Spleen (tissue), 13 donors: ENCODE measurements at regions of chr11 and their contacts with region 1.

Region 1: DNA sequence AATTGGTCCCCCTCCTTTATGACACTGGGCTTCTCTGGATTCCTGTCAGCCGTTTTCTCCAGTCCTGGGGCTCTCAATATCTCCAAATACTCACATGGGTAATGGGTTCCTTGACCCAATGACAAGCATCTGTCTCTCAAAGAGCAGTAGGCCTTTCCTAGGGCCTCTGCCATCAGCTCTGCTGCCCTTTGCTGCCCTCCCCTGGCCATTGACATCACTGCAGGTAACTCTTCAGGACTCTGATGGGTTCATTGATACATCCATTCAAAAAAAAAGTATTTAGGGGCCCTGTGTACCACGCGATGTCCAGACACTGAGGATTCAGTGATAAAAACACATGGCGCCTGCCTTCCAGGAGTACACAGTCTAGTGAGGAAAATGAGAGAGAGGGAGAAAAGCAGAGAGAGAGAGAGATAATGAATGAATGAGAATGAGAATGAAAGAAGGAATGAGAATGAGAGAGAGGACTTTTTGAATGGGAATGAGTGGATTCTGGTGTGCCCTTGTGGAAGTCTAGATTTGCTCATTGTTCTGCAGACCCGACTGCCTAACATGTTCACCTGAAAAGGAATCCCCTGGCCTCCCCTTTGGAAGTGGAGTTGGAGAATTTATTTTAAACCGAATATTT is 42.6 kb upstream of the OLFML1 start:
- DNase-seq: peak; percentile 87
- H3K4me3 ChIP-seq: no peak overlapping the region
- H3K27ac ChIP-seq: no peak overlapping the region
- H3K4me1 ChIP-seq: peaks cover 0 to 14% (median 4%) of the 10 kb centered on the region in 6 donors
- H3K27me3 ChIP-seq: peaks cover 0 to 6% (median 0%) of the 10 kb centered on the region in 7 donors
- CTCF ChIP-seq: peak; percentile 68 to 89 (median 78)
- POLR2A ChIP-seq: no peak

Region 2: GRCh38 chr11:7098235-7098832 is 344.4 kb before region 1 on chr11:
- intact Hi-C with region 1: loop called (anchors 5 kb)
- DNase-seq: no peak
- H3K4me3 ChIP-seq: no peak overlapping the region
- H3K27ac ChIP-seq: no peak overlapping the region
- H3K4me1 ChIP-seq: no peaks in the 10 kb centered on the region
- H3K27me3 ChIP-seq: peaks cover 0 to 19% (median 0%) of the 10 kb centered on the region in 7 donors
- CTCF ChIP-seq: peak in 10 of 11 experiments; percentile 29 to 76 (median 54)
- POLR2A ChIP-seq: no peak